ENCODE measurements at regions of chr17 and their contacts with region 1.

Region 1: GRCh38 chr17:74759243-74759801 is 10.9 kb downstream of the NHERF1 start:
- DNase-seq: no peak
- H3K4me3 ChIP-seq: no peak overlapping the region
- CTCF ChIP-seq: no peak

Region 2: GRCh38 chr17:74712756-74713155 is 46.6 kb before region 1 on chr17 and contains the start of gene CD300LF:
- CTCF ChIA-PET with region 1: no interaction called
- POLR2A ChIA-PET with region 1: no interaction called
- DNase-seq: no peak
- H3K4me3 ChIP-seq: no peak within 1 kb of the TSS
- CTCF ChIP-seq: no peak

Region 3: DNA sequence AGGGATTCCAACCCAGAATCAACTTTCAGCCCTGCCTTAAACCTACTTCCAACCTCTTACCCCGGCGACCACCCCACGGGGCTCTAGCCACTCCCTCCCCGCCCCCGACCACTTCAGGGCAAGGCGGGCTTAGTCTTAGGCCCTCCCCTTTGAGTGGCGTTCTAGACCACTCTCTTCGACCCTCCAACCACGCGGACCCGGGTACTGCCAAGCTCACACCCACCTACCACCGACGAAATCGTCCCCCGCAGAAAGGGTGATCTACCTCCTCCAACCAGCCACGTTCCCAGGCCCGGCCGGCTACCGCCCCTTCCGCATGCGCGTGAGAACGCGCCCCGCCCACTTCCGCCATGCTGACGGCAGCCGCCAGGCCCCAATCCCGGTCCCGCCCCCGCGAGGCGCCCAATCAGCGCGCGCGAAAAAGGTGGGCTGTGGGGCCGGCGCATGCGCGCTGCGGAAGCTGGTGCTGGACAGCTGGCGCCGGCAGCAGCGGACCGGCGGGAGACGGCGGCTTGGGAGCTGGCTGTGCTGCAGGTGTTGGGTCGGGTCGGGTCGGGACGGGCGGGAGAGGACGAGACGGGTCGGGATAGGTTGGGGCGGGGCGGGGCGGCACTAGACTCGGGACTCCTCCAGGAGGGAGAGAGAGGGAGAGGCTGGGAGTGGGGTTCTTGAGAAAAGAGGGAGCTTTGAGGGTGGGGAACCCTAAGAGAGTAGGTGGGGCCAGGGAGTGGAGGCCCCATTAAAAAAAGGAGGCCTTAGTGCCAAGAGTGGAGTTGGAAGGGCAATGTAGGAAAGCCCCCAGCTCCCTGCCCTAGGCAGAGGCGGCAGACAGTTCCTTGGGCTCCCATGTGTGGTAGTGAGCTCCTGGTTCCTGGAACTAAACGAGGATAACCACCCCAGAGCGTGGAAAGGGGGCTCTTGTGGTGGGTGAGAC is 17.0 kb after region 1 on chr17 and contains the start of gene NAT9:
- CTCF ChIA-PET with region 1: interaction called, 27 read pairs
- POLR2A ChIA-PET with region 1: interaction called, 3 read pairs
- DNase-seq: peak; percentile 34
- H3K4me3 ChIP-seq: peak within 1 kb of the TSS; percentile 98
- CTCF ChIP-seq: no peak